ENCODE measurements at regions of chr10 and their contacts with region 1.

Region 1: GRCh38 chr10:93288654-93289634 is 193.2 kb downstream of the MYOF start:
- DNase-seq: peak; percentile 68 to 84
- ATAC-seq: peak; percentile 84
- H3K4me3 ChIP-seq: no peak overlapping the region
- H3K27ac ChIP-seq: peak overlapping the region in 1 of 2 donors; percentile 45
- H3K4me1 ChIP-seq: no peaks in the 10 kb centered on the region
- H3K27me3 ChIP-seq: no peaks in the 10 kb centered on the region

Region 2: DNA sequence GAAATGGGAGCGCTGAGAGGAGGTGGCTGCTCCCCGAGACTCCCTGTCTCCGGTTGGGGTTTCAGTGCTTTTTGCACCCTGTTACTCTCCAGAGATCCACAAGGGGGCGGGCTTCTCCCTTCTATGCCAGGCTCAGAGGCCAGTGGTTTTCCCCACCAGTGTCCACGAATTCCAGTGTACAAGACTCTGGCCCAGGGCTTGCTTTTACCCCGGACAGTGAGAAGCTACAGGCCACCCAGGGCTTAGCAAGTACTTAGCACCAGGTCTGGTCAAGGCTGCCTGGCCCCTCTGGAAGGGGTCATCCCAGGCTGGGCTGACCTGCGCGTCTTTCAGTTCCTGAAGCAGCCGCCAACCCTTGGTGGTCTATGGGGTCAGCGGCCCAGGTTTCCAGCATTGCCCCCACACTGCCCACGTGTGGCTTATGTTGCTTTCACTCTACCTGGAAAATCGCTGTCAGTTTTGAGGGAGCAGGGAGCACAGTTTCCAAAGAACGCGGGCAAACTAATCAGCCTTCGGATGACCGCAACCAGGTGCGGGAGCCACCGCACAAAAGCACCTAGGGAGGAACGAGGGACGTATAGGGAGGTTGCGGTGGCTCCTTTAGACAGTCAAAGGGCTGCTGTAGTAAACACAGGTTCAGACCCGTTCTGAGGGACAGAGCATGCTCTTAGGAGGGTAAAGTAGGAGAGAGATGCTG is 208.4 kb before region 1 on chr10:
- intact Hi-C with region 1: loop called (anchors 2 to 5 kb)
- DNase-seq: no peak
- ATAC-seq: peak; percentile 82
- H3K4me3 ChIP-seq: no peak overlapping the region
- H3K27ac ChIP-seq: no peak overlapping the region
- H3K4me1 ChIP-seq: no peaks in the 10 kb centered on the region
- H3K27me3 ChIP-seq: no peaks in the 10 kb centered on the region

Region 3: DNA sequence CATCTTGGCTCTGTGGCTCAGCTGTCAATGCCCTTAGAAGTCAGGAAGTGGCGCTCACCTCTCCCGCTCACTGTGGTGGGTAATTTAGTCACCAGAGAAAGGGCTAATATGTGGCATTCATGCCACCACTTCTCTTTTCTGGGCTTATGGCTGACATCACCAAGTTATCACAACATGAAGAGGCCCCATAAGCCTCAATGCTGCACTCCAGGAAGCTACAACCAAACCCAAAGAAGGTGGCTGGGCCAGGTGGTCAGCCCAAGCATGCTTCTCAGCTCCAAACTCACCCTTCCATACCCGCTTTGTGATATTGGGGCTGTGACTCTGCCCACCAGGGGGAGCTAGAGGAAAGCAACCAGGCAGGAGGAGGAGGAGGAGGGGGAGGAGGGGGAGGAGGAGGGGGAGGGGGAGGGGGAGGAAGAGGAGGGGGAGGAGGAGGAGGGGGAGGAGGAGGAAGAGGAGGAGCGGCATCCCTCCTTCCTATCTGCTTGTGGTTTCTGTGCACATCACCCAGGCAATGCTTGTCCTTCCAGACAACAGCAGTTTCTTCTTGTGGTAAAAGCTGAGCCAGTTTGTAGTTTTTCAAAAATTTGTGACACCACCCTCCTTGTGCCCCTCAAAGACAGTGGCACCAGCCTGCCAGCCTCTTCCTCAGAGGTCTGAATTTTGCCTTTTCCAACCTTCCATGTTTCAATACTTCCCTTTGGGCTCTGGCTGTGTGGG is 173.1 kb before region 1 on chr10:
- intact Hi-C with region 1: loop called (anchors 5 to 10 kb)
- DNase-seq: peak; percentile 82 to 86
- ATAC-seq: peak; percentile 80
- H3K4me3 ChIP-seq: no peak overlapping the region
- H3K27ac ChIP-seq: no peak overlapping the region
- H3K4me1 ChIP-seq: no peaks in the 10 kb centered on the region
- H3K27me3 ChIP-seq: no peaks in the 10 kb centered on the region

Region 4: DNA sequence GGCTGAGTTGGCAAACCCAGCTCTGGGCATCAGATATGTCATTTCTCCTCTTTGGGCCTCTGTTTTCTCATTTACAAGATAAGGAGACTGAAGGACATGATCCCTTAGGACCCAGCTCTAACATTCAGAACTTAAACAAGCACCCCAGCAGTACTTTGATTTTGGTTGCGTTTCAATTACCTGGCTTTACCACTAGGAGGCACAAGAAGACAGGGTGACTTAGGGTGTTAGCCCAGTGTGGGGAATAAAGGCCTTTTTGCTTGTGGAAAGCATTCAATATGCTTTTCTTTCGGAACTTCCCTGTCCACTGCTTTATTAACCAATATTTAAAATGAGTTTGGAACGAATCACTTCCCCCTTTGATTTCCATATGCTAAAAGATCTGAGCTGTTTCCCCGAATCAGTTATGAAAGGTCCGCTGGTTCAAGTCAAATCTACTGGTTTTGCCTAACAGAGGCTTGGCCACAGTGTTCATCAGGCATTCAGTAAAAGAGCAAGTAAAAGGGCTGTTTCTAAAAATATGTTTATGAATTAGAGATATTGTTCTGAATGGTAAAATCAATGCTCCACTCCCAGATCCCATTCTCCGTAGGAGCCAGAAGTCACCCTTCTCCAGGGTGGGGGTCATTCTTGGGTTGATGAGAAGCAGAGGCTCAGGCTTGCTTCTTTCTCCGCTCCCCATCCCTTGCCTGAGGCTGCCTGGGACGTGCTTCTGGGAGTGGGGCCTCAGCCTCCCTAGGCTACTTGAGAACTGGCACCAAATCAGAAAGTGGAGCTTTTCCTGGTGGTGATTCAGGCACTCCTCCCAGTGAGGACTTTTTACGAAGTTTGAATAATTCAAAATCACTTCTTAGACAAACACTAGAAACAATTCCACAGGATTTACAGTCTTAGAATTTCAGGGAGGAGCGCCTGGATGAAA is 87.7 kb after region 1 on chr10:
- intact Hi-C with region 1: no loop called
- DNase-seq: peak; percentile 67 to 75
- ATAC-seq: peak; percentile 92
- H3K4me3 ChIP-seq: peak overlapping the region in 1 of 2 donors; percentile 26
- H3K27ac ChIP-seq: peak overlapping the region; percentile 86 to 98
- H3K4me1 ChIP-seq: peaks cover 7 to 9% of the 10 kb centered on the region in 2 donors
- H3K27me3 ChIP-seq: no peaks in the 10 kb centered on the region

Measured in aorta (tissue), 5 donors.